HCT116 (cell line): ENCODE measurements at regions of chr6 and their contacts with region 1.

Region 1: GRCh38 chr6:28981833-28982475 is 23.2 kb downstream of the ZNF311 start:
- DNase-seq: peak; percentile 91
- ATAC-seq: peak; percentile 35
- H3K4me3 ChIP-seq: peak overlapping the region; percentile 31 to 56
- H3K27ac ChIP-seq: peak overlapping the region; percentile 24; the same call in 1 of the 2 replicates
- H3K4me1 ChIP-seq: peaks cover 35 to 71% of the 10 kb centered on the region in 2 experiments
- H3K27me3 ChIP-seq: no peaks in the 10 kb centered on the region
- CTCF ChIP-seq: no peak
- POLR2A ChIP-seq: no peak
- RAD21 ChIP-seq: peak; percentile 45; the same call in 1 of the 2 replicates

Region 2: DNA sequence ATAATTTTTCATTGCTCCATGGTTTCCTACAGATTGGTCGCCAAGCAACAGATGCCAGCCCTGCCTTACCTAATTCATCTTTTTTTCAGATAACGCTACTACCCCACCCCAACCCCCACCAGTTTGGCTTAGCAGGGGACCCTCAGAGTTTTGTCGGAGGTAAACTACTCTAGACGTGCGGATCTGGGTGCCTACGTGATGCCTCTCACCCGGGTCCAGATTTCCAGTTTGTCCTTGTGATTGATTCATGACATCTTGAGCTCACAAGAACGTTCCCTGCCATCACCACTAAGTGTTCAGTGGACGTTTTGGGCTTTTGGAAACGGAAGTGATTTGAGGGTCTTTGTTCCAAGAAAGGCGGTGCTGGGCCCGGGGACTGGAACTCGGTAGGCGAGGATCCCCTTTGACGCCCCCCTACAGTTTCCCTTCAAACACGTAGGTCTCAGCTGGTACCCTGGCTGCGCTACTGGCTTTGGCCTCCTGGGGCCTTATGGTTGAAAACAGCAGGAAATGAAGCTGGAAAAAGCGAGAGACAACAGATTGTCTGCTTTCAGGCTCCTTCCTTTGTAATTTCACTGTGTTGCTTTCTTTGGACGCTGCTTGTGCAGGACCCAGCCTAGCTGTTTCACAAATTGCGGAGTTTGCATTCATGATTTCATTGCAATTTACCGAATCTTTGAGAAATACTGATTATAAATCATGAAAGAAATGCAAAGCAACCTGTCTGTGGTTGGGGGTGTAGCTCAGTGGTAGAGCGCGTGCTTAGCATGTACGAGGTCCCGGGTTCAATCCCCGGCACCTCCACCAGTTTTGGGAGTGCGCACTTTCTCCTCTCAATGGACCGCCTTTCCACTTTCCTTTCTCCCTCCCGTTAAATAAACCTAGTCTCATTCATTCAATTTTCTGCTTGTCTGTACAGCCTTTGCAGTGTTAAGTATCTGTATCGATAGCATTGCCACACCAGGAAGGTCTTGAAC is 375.2 kb before region 1 on chr6:
- CTCF ChIA-PET with region 1: no interaction called
- POLR2A ChIA-PET with region 1: no interaction called
- RAD21 ChIA-PET with region 1: no interaction called
- intact Hi-C with region 1: loop called (anchors 10 kb)
- DNase-seq: peak; percentile 87
- ATAC-seq: peak; percentile 88
- H3K4me3 ChIP-seq: peak overlapping the region; percentile 40 to 53
- H3K27ac ChIP-seq: peak overlapping the region; percentile 46
- H3K4me1 ChIP-seq: peaks cover 11 to 39% of the 10 kb centered on the region in 2 experiments; a peak in 3 of 4 replicates
- H3K27me3 ChIP-seq: no peaks in the 10 kb centered on the region
- CTCF ChIP-seq: peak in 2 of 3 experiments; percentile 58 to 59; a peak in 4 of 6 replicates
- POLR2A ChIP-seq: no peak
- RAD21 ChIP-seq: no peak

Region 3: GRCh38 chr6:28742668-28743270 is 239.2 kb before region 1 on chr6:
- CTCF ChIA-PET with region 1: no interaction called
- POLR2A ChIA-PET with region 1: no interaction called
- RAD21 ChIA-PET with region 1: no interaction called
- intact Hi-C with region 1: loop called (anchors 5 kb)
- DNase-seq: peak; percentile 86
- ATAC-seq: peak; percentile 65
- H3K4me3 ChIP-seq: peak overlapping the region; percentile 34 to 59
- H3K27ac ChIP-seq: peak overlapping the region; percentile 46
- H3K4me1 ChIP-seq: peaks cover 3 to 20% of the 10 kb centered on the region in 2 experiments; a peak in 3 of 4 replicates
- H3K27me3 ChIP-seq: no peaks in the 10 kb centered on the region
- CTCF ChIP-seq: no peak
- POLR2A ChIP-seq: no peak
- RAD21 ChIP-seq: no peak

Region 4: GRCh38 chr6:28794175-28795002 is 187.6 kb before region 1 on chr6:
- CTCF ChIA-PET with region 1: no interaction called
- POLR2A ChIA-PET with region 1: no interaction called
- RAD21 ChIA-PET with region 1: no interaction called
- intact Hi-C with region 1: no loop called
- DNase-seq: no peak
- ATAC-seq: no peak
- H3K4me3 ChIP-seq: no peak overlapping the region
- H3K27ac ChIP-seq: no peak overlapping the region
- H3K4me1 ChIP-seq: peaks cover 22 to 41% of the 10 kb centered on the region in 2 experiments
- H3K27me3 ChIP-seq: no peaks in the 10 kb centered on the region
- CTCF ChIP-seq: no peak
- POLR2A ChIP-seq: no peak
- RAD21 ChIP-seq: no peak

Region 5: GRCh38 chr6:28895134-28895812 is 86.7 kb before region 1 on chr6:
- CTCF ChIA-PET with region 1: no interaction called
- POLR2A ChIA-PET with region 1: no interaction called
- RAD21 ChIA-PET with region 1: interaction called in 1 of 2 experiments, 3 read pairs
- intact Hi-C with region 1: loop called (anchors 1 kb)
- DNase-seq: peak; percentile 95
- ATAC-seq: peak; percentile 75
- H3K4me3 ChIP-seq: peak overlapping the region; percentile 61 to 66
- H3K27ac ChIP-seq: peak overlapping the region; percentile 85
- H3K4me1 ChIP-seq: peaks cover 11 to 37% of the 10 kb centered on the region in 2 experiments; a peak in 3 of 4 replicates
- H3K27me3 ChIP-seq: no peaks in the 10 kb centered on the region
- CTCF ChIP-seq: no peak
- POLR2A ChIP-seq: peak; percentile 69
- RAD21 ChIP-seq: no peak

Region 6: GRCh38 chr6:28940858-28941680 is 40.9 kb before region 1 on chr6:
- CTCF ChIA-PET with region 1: no interaction called
- POLR2A ChIA-PET with region 1: interaction called, 4 read pairs
- RAD21 ChIA-PET with region 1: no interaction called
- intact Hi-C with region 1: loop called (anchors 1 kb)
- DNase-seq: peak; percentile 79
- ATAC-seq: peak; percentile 74
- H3K4me3 ChIP-seq: peak overlapping the region; percentile 42 to 65
- H3K27ac ChIP-seq: peak overlapping the region; percentile 51
- H3K4me1 ChIP-seq: peaks cover 11 to 43% of the 10 kb centered on the region in 2 experiments; a peak in 3 of 4 replicates
- H3K27me3 ChIP-seq: no peaks in the 10 kb centered on the region
- CTCF ChIP-seq: 0 out of 6 replicates have a peak, but pooled peaks of 1 of the 3 experiments have one; percentile 15
- POLR2A ChIP-seq: peak; percentile 25
- RAD21 ChIP-seq: no peak

Region 7: GRCh38 chr6:29403801-29404200 is 421.8 kb after region 1 on chr6:
- CTCF ChIA-PET with region 1: no interaction called
- POLR2A ChIA-PET with region 1: no interaction called
- RAD21 ChIA-PET with region 1: no interaction called
- intact Hi-C with region 1: no loop called
- DNase-seq: no peak
- ATAC-seq: no peak
- H3K4me3 ChIP-seq: no peak overlapping the region
- H3K27ac ChIP-seq: no peak overlapping the region
- H3K4me1 ChIP-seq: no peaks in the 10 kb centered on the region
- H3K27me3 ChIP-seq: no peaks in the 10 kb centered on the region
- CTCF ChIP-seq: no peak
- POLR2A ChIP-seq: no peak
- RAD21 ChIP-seq: no peak